Aorta (tissue), 5 donors: ENCODE measurements at regions of chr4 and their contacts with region 1.

Region 1: DNA sequence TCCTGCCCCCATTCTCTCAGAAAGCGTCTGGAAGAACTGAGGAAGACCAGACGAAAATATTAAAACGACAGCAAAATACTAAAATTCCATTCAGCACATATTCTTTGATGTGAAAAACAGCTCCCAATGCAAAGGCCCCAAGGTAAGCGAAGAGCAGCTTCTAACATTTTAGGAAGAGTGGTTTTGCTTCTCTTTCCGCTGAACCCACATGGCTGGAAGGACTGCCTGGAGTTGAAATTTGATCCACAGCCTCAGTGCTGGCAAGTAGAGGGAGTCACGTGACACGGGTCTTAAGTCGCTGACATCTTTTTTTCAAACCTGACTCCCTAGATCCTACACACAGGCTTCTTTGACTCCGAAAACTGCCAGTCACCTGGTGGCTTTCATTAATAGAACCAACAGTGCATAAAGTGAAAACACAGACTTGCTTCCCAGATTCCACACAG is at the start of gene FAM13A:
- DNase-seq: peak; percentile 85 to 87
- ATAC-seq: peak; percentile 96
- H3K4me3 ChIP-seq: peak within 1 kb of the TSS; percentile 58 to 99
- H3K27ac ChIP-seq: peak within 1 kb of the TSS in 1 of 2 donors; percentile 40
- H3K4me1 ChIP-seq: no peaks in the 10 kb centered on the region
- H3K27me3 ChIP-seq: no peaks in the 10 kb centered on the region
- total RNA-seq, gene FAM13A: 27.8 to 60.3 TPM

Region 2: DNA sequence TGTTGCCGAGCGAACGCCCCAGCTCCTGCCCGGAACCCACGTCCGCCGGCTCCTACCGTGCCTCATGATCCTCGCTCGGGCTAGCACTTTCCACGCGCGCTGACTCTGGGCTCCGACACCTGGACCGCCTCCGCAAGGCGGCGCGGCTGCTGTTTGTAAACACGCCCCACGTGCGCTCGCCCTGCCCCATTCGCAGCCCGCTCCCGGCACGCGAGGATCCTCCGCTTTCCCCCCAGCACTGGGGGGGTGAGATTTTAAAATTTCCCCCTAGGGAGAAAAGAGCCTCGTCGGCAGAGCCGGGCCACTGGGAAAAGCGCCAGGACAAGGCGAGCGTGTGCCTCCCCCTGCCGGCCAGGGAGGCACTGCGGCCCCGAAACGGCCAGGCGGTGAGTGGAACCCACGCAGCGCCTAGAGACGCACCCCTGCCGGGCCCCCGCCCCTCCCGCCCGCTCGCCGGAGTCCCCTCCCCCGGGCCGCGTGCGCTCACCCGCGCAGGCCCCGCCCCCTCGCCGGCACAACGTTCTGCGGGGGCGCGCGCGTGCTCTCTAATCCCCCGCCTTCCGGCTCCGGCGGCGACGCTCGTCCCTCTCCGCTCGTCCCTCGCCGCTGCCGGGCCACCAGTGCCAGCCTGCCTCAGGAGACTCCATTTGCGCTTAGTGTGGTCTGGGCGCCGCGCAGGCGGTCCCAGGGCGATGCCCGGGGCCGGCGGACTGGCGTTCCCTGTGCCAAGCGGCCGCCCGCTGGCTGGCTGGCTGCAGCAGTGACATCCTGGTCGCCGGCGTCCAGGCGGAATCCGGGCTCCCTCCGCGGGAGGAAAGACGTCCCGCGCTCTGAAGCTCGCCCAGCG is 54.2 kb after region 1 on chr4 and contains the start of gene TIGD2:
- intact Hi-C with region 1: loop called (anchors 5 kb)
- DNase-seq: peak; percentile 90 to 96
- ATAC-seq: peak; percentile 98
- H3K4me3 ChIP-seq: peak within 1 kb of the TSS; percentile 38 to 65
- H3K27ac ChIP-seq: peak within 1 kb of the TSS in 1 of 2 donors; percentile 38
- H3K4me1 ChIP-seq: no peaks in the 10 kb centered on the region
- H3K27me3 ChIP-seq: no peaks in the 10 kb centered on the region
- total RNA-seq, gene TIGD2: 1.5 to 2.2 TPM